A549 (cell line): ENCODE measurements at regions of chr19 and their contacts with region 1.

Region 1: DNA sequence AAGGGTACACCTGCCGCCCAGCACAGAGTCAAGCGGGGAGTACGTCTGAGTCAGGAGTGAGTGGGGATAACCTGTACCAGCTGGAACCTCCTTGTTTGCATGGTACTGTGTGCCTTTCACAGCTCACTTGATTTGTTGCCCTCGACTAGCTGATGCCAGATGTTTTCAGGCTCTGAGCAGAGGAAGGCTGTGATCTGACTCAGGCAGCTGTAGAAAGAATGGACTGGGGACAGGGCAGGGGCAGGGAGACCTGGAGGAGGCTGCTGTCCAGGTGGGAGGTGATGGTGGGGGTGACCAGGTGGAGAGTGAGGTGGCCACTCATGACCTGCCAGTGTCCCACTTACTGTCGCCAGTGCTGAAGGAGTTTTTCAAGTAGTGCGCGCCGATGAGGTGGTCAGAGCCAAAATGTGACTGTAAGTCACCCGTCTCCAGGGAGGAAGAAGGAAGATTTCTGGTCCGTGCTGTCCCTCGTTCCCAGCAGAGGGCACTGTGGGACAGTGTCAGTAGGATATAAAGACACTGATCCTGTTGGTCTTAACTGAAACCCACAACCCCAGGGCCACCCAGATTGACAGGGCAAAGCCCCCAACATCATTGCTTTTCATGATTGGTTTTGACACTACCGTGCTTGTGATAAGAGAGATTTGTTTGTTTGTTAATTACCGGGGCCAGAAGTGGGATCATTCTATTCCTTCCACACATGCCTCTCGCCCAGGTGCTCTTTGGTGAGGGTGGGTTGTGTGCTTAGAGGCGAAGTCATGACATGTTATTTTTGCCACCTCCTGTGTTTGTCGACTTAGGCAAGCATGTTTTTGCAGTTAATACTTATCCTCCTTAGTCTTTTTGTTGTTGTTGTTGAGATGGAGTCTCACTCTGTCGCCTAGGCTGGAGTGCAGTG is 128.4 kb downstream of the DPF1 start:
- DNase-seq: peak; percentile 86 to 87
- ATAC-seq: peak; percentile 87 to 89
- H3K4me3 ChIP-seq: no peak overlapping the region
- H3K27ac ChIP-seq: peak overlapping the region in 1 of 2 experiments; percentile 35; a peak in 1 of 6 replicates
- H3K4me1 ChIP-seq: no peaks in the 10 kb centered on the region
- CTCF ChIP-seq: peak; percentile 97
- EP300 ChIP-seq: no peak
- POLR2A ChIP-seq: peak; percentile 8; the same call in 1 of the 2 replicates
- RAD21 ChIP-seq: peak; percentile 82 to 83

Region 2: GRCh38 chr19:38062959-38063761 is 32.5 kb before region 1 on chr19:
- CTCF ChIA-PET with region 1: interaction called, 11 read pairs
- POLR2A ChIA-PET with region 1: no interaction called
- DNase-seq: no peak
- ATAC-seq: peak; percentile 4 to 15; a peak in 3 of 6 replicates
- H3K4me3 ChIP-seq: no peak overlapping the region
- H3K27ac ChIP-seq: peak overlapping the region in 1 of 2 experiments; percentile 24; a peak in 1 of 6 replicates
- H3K4me1 ChIP-seq: peaks cover 22% of the 10 kb centered on the region
- CTCF ChIP-seq: no peak
- EP300 ChIP-seq: no peak
- POLR2A ChIP-seq: no peak
- RAD21 ChIP-seq: no peak

Region 3: DNA sequence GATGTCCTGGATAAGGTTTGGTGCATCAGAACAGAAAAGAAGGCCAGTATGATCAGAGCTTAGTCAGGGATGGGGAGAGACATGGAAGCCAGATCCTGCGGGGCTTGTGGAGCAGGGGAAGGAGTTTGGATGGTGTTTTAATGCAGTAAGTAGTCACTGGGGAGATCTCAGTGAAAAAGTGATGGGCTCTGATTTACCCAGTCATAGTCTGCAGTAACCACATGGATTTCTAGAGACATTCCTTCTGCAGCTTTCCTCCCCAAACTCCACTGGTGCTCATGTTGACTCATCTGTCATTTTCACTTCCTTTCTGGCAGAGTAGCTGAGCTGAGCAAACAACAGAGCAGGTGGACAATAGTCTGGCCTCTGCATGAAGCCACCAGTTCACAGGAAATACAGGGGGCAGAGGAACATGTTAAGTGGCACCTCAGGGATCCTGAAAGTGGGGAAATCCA is 15.7 kb before region 1 on chr19:
- CTCF ChIA-PET with region 1: interaction called, 13 read pairs
- POLR2A ChIA-PET with region 1: interaction called, 3 read pairs
- DNase-seq: peak; percentile 78 to 92
- ATAC-seq: peak; percentile 84 to 94
- H3K4me3 ChIP-seq: no peak overlapping the region
- H3K27ac ChIP-seq: peak overlapping the region; percentile 57 to 80; a peak in 5 of 6 replicates
- H3K4me1 ChIP-seq: peaks cover 20% of the 10 kb centered on the region
- CTCF ChIP-seq: no peak
- EP300 ChIP-seq: no peak
- POLR2A ChIP-seq: no peak
- RAD21 ChIP-seq: no peak; a peak in 1 of 5 replicates

Region 4: GRCh38 chr19:38107129-38107528 is 11.5 kb after region 1 on chr19:
- CTCF ChIA-PET with region 1: interaction called, 19 read pairs
- POLR2A ChIA-PET with region 1: no interaction called
- DNase-seq: no peak
- ATAC-seq: peak in 1 of 2 experiments; percentile 8; a peak in 1 of 6 replicates
- H3K4me3 ChIP-seq: no peak overlapping the region
- H3K27ac ChIP-seq: peak overlapping the region in 1 of 2 experiments; percentile 5; a peak in 1 of 6 replicates
- H3K4me1 ChIP-seq: peaks cover 9% of the 10 kb centered on the region; the same call in 2 of the 3 replicates
- CTCF ChIP-seq: no peak
- EP300 ChIP-seq: no peak
- POLR2A ChIP-seq: no peak
- RAD21 ChIP-seq: no peak

Region 5: GRCh38 chr19:38115271-38115802 is 19.7 kb after region 1 on chr19:
- CTCF ChIA-PET with region 1: interaction called, 11 read pairs
- POLR2A ChIA-PET with region 1: no interaction called
- DNase-seq: no peak
- ATAC-seq: peak; percentile 19 to 31; a peak in 3 of 6 replicates
- H3K4me3 ChIP-seq: no peak overlapping the region
- H3K27ac ChIP-seq: no peak overlapping the region
- H3K4me1 ChIP-seq: no peaks in the 10 kb centered on the region
- CTCF ChIP-seq: no peak
- EP300 ChIP-seq: no peak
- POLR2A ChIP-seq: no peak
- RAD21 ChIP-seq: no peak